ENCODE measurements at regions of chr11 and their contacts with region 1.

Region 1: GRCh38 chr11:126194121-126194543 is 17.3 kb downstream of the RPUSD4 start:
- DNase-seq: no peak
- ATAC-seq: peak; percentile 42 to 72 (median 56)
- H3K4me3 ChIP-seq: no peak overlapping the region
- H3K27ac ChIP-seq: no peak overlapping the region
- H3K4me1 ChIP-seq: peaks cover 0 to 6% (median 2%) of the 10 kb centered on the region in 4 donors
- H3K27me3 ChIP-seq: no peaks in the 10 kb centered on the region
- CTCF ChIP-seq: peak; percentile 64 to 90 (median 68)
- POLR2A ChIP-seq: no peak

Region 2: GRCh38 chr11:125923012-125923579 is 271.0 kb before region 1 on chr11:
- intact Hi-C with region 1: loop called (anchors 5 kb)
- DNase-seq: peak in 2 of 3 donors; percentile 43 to 74
- ATAC-seq: peak; percentile 77 to 87 (median 82)
- H3K4me3 ChIP-seq: no peak overlapping the region
- H3K27ac ChIP-seq: no peak overlapping the region
- H3K4me1 ChIP-seq: peaks cover 0 to 14% (median 0%) of the 10 kb centered on the region in 4 donors
- H3K27me3 ChIP-seq: no peaks in the 10 kb centered on the region
- CTCF ChIP-seq: peak; percentile 71 to 84 (median 78)
- POLR2A ChIP-seq: no peak

Region 3: DNA sequence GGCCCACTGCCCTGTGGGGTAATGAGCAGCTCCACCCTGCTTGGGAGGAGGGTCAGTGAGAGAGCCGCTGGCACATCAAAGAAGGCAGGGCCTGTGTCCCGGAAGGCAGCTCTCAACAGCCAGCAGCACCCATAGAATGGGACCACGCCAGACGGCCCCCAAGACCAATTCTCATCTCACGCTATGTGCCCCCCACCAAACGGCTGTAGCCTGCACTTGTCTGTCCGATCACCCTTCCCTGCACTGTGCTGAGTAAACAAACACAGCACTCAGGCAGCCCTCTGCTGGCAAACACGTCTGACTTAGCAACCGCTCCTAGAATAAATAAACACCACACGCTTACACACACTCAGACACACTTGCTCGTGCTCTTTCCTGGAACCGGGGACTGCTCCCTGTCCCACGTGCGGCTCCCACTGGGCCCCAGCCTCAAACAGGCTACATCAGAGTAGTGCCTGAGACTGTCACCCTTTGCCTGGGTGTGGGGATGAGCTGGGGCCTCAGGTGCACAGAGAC is 78.3 kb before region 1 on chr11:
- intact Hi-C with region 1: no loop called
- DNase-seq: peak; percentile 74 to 87 (median 82)
- ATAC-seq: peak; percentile 79 to 83 (median 82)
- H3K4me3 ChIP-seq: no peak overlapping the region
- H3K27ac ChIP-seq: peak overlapping the region in 2 of 3 donors; percentile 12 to 92
- H3K4me1 ChIP-seq: peaks cover 0 to 33% (median 15%) of the 10 kb centered on the region in 4 donors
- H3K27me3 ChIP-seq: no peaks in the 10 kb centered on the region
- CTCF ChIP-seq: peak in 3 of 4 donors; percentile 19 to 30 (median 29)
- POLR2A ChIP-seq: no peak